Dendritic cell treated with granulocyte-macrophage colony-stimulating factor and Interleukin-4, amounts not matched to agents 40 ng/mL and 50 ng/mL, for 4 days (primary cell): ENCODE measurements at regions of chr6 and their contacts with region 1.

Region 1: DNA sequence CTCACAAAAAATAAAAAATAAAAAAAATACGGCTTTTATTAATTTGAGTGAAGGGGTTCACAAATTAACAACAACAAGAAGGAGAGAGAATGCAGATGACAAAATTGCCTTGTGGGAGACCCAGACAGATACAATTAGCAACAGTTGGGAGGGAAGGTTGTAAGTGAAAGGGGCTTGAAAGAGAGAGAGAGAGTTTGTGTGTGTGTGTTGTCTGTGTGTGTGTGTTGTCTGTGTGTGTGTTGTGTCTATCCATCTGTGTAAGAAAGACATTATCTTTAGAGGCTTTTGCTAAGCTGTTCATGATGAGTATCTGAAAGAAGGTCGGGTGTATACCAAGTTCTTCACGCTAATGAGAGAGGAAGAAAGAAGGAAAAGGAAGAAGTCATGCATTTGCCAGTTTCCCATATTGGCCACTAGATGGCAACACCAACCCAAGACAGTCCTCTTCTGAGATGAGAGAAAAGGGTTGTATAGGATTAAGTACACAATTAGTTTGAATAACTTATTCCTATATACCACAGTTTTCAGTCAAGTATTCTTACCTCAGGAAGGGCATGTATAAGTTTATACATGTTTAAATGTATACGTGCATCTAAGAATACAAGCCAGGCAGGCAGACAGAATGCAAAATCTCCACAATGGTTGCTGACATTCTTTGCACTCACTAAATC is 63.7 kb upstream of the CD2AP start:
- H3K4me3 Mint-ChIP-seq: peak overlapping the region; percentile 61
- H3K27ac Mint-ChIP-seq: peak overlapping the region; percentile 32
- H3K4me1 Mint-ChIP-seq: peaks cover 19% of the 10 kb centered on the region
- H3K27me3 Mint-ChIP-seq: peaks cover 35% of the 10 kb centered on the region

Region 2: DNA sequence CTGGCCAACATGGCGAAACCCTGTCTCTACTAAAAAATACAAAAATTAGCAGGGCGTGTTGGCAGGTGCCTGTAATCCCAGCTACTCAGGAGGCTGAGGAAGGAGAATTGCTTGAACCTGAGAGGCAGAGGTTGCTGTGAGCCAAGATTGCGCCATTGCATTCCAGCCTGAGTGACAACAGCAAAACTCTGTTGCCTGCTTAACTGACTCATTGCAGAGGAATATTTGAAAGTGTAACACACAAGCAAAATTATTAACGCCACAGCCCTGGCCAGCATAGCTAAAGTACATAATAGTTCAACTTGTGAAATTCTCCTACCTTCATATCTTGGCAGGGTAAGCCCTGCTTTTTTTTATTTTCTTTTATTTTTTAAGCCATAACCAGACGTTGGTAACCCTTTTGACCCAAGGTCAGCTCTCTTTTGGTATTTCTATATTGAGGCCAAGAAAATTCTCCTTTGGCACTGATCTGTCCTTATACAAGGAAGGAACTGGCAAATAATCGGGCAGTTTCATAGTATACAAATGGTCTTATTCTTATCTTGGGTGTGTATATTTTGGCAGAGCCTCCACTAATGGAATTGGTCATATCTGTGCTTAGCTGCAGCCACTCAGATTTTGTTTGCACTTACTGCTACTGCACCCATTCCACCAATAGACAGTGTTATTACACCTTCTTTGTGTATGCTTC is 488.2 kb before region 1 on chr6:
- intact Hi-C with region 1: no loop called
- H3K4me3 Mint-ChIP-seq: no peak overlapping the region
- H3K27ac Mint-ChIP-seq: no peak overlapping the region
- H3K4me1 Mint-ChIP-seq: no peaks in the 10 kb centered on the region
- H3K27me3 Mint-ChIP-seq: no peaks in the 10 kb centered on the region

Region 3: DNA sequence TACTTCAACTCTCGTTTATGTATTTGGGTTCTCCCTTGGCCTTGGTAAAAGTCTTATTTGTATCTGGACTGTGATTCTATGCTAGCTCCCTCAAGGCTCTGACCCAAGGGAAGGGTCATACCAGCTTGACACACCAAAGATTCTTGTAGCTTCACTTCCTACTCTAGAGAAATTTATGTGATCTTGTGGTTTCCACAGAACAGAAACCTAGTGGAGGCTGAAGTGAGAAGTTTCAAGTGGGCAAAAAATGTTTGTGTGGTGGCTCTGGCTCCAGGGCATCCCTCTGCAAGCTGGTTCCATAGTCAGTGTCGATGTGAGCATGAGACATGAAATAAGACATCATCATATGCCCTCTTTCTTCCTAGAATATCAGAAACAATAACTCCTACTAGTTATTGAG is 56.1 kb before region 1 on chr6:
- intact Hi-C with region 1: no loop called
- H3K4me3 Mint-ChIP-seq: no peak overlapping the region
- H3K27ac Mint-ChIP-seq: no peak overlapping the region
- H3K4me1 Mint-ChIP-seq: peaks cover 45% of the 10 kb centered on the region
- H3K27me3 Mint-ChIP-seq: peaks cover 52% of the 10 kb centered on the region

Region 4: GRCh38 chr6:47477497-47478232 is 63.8 kb after region 1 on chr6 and contains the start of gene CD2AP:
- intact Hi-C with region 1: loop called (anchors 5 kb)
- H3K4me3 Mint-ChIP-seq: peak within 1 kb of the TSS; percentile 98
- H3K27ac Mint-ChIP-seq: peak within 1 kb of the TSS; percentile 81
- H3K4me1 Mint-ChIP-seq: peaks cover 12% of the 10 kb centered on the region
- H3K27me3 Mint-ChIP-seq: peaks cover 31% of the 10 kb centered on the region

Region 5: DNA sequence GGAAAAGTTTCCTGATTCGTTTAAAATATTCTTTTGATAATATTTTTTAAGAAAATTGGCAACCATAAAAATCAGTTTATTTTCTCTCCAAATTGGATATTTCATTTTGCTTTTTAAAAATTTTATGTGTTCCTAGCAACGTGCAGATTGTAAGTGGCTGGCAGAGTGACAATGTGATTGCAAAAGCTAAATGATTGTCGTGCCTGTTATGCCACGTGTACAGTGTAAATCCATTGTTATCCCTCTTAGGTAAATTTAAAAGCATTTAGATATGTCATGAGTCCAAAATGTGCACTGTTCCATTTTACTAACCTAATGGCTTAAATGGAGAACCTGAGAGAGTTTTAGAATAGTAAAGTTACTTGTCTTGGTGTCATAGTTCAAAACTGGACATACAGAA is 190.1 kb after region 1 on chr6:
- intact Hi-C with region 1: loop called (anchors 10 kb)
- H3K4me3 Mint-ChIP-seq: no peak overlapping the region
- H3K27ac Mint-ChIP-seq: no peak overlapping the region
- H3K4me1 Mint-ChIP-seq: no peaks in the 10 kb centered on the region
- H3K27me3 Mint-ChIP-seq: no peaks in the 10 kb centered on the region

Region 6: DNA sequence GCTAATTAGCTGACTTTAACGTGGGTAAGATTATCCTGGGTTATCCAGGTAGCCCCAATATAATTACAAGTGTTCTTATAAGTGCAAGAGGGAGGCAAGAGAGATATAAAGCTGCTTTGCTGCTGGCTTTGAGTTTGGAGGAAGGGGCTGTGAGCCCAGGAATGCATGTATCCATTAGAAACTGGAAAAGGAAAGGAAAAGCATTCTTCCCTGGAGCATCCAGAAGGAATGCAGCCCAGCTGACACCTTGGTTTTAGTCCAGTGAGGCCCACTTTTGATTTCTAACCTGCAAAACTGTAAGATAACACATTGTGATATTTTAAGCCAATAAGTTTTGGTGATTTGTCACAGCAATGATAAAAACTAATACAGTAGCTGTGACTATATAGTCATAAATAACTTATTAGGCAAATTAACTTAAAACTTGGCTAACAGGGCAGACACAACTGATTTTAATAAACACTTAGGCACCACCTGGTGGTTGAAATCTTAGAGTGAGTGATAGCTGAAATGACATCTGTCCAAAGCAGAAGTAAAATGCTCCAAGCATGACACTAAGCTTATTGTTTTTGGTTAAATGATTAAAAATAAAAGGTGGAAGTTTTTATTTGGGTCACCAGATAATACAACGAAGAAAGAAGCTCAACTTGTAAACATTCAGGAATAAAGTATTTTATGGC is 320.1 kb after region 1 on chr6:
- intact Hi-C with region 1: loop called (anchors 2 kb)
- H3K4me3 Mint-ChIP-seq: no peak overlapping the region
- H3K27ac Mint-ChIP-seq: no peak overlapping the region
- H3K4me1 Mint-ChIP-seq: no peaks in the 10 kb centered on the region
- H3K27me3 Mint-ChIP-seq: peaks cover 5% of the 10 kb centered on the region

Region 7: DNA sequence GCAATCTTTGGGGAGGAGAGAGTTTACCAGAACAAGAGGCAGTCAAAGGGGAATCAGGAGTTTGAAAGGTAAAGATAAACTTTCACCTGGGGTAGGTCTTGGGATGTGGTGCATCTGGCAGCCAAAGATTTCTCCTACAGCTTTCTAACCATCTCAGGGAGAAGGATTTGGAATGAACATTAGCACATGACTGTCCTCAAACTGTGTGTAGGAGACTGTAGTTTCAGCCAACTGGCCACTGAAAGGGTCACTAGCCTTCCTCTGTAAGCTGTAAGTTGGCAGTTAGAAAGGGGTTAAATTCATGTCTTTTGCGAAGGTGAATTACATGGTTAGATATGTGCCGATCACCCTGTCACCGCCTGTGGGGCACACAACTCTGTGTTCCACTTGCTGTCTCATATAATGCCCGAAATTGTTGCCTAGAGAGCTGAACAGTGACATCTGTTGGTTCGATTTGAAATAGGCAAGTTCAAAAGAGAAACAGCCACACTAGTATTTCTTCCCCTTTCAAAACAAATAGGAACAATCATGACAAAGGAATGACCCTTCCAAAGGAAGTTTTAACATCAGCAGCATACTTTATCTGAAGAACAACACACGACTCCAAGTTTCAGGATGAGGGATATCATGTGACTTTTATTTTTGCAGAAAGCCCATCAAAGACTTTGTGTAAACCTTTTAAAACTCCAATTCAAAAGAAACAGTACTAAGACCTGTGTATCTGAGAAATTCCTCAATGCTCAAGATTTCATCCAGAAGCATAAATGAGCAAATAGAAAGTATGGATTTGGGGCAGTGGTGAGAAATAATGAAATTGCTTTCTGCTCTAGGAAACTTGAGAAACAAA is 366.8 kb after region 1 on chr6:
- intact Hi-C with region 1: loop called (anchors 1 kb)
- H3K4me3 Mint-ChIP-seq: no peak overlapping the region
- H3K27ac Mint-ChIP-seq: no peak overlapping the region
- H3K4me1 Mint-ChIP-seq: peaks cover 5% of the 10 kb centered on the region
- H3K27me3 Mint-ChIP-seq: peaks cover 10% of the 10 kb centered on the region